SK-N-SH (cell line): ENCODE measurements at regions of chr20 and their contacts with region 1.

Region 1: DNA sequence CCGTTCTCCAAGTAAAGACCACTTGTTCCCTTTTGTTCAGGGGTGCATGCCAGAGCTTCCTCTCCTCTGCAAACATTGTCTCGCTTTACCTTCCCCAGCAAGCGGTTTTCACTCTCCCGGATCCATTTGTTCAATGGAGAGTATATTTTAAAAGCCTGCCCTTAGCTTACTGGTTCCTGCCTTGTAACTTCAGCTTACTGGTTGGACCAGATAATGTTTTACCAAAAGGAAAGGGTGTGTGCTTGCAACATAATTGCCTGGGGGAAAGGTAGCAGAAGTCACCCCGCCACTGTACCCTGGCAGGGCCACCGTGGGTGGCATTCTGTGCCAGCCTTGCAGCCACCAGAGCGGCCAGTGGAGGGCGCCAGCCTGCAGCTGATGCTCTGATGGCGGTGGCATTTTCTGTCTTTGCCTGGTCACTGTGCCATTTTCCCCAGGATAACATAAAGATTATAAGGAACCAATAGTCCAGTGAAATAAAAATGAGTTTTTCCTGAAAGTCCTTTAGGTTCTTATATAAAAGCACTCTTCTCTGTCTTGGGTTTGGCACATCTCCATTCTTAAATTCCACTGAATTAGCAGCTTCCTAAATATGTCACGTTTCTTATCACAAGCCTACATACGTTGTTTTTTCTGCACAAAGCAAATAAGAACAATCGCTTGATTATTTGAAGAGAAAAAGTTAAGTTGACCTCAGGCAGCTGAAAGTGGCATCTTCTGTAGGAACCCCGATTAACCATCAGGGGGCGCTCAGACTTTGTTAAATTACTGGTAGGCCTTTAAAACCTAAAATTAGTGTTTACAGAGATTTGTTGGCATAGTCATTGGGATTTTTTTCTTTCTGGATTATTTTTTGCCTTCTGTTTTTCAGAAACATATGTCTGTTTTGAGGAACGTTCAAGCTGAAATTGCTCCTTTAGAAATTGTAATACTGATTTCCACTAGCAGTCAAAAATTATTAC is 67.4 kb upstream of the XRN2 start:
- DNase-seq: peak; percentile 65
- H3K4me3 ChIP-seq: no peak overlapping the region; a peak in 1 of 4 replicates
- H3K27ac ChIP-seq: no peak overlapping the region
- H3K4me1 ChIP-seq: peaks cover 0 to 3% of the 10 kb centered on the region in 2 experiments; a peak in 2 of 4 replicates
- H3K27me3 ChIP-seq: no peaks in the 10 kb centered on the region
- CTCF ChIP-seq: peak; percentile 92
- EP300 ChIP-seq: no peak
- RAD21 ChIP-seq: peak; percentile 81

Region 2: GRCh38 chr20:20837574-20838021 is 398.2 kb before region 1 on chr20:
- CTCF ChIA-PET with region 1: interaction called, 27 read pairs
- POLR2A ChIA-PET with region 1: no interaction called
- DNase-seq: peak; percentile 63
- H3K4me3 ChIP-seq: peak overlapping the region in 1 of 2 experiments; percentile 47; a peak in 2 of 4 replicates
- H3K27ac ChIP-seq: no peak overlapping the region
- H3K4me1 ChIP-seq: no peaks in the 10 kb centered on the region; a peak in 1 of 4 replicates
- H3K27me3 ChIP-seq: peaks cover 36% of the 10 kb centered on the region
- CTCF ChIP-seq: peak; percentile 77
- EP300 ChIP-seq: no peak
- RAD21 ChIP-seq: peak; percentile 75

Region 3: DNA sequence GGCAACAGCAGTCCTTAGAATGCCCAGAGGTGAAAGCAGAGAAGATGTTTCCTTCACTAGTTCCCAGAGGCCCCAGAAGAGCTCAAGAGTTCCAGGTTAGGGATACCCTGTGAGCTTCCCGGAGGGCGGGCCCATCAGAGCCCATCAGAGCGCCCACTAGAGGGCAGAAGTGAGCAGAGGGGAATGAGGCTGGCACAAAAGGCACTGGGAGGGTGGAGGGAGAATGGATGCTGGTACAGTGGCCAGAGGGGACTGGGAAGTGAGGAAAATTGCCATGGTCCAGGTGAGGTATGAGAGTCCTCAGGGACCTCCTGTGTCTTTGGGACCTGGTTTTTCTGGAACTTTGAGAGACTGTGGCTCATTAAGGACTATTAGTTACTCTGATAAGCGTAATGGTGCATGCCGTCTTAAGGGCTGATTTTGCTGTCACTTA is 186.9 kb before region 1 on chr20:
- CTCF ChIA-PET with region 1: interaction called, 13 read pairs
- POLR2A ChIA-PET with region 1: no interaction called
- DNase-seq: peak; percentile 45
- H3K4me3 ChIP-seq: no peak overlapping the region; a peak in 1 of 4 replicates
- H3K27ac ChIP-seq: no peak overlapping the region
- H3K4me1 ChIP-seq: no peaks in the 10 kb centered on the region; a peak in 1 of 4 replicates
- H3K27me3 ChIP-seq: no peaks in the 10 kb centered on the region; the same call in 1 of the 2 replicates
- CTCF ChIP-seq: peak; percentile 66
- EP300 ChIP-seq: no peak
- RAD21 ChIP-seq: 0 out of 2 replicates have a peak, but pooled peaks have one; percentile 26

Region 4: DNA sequence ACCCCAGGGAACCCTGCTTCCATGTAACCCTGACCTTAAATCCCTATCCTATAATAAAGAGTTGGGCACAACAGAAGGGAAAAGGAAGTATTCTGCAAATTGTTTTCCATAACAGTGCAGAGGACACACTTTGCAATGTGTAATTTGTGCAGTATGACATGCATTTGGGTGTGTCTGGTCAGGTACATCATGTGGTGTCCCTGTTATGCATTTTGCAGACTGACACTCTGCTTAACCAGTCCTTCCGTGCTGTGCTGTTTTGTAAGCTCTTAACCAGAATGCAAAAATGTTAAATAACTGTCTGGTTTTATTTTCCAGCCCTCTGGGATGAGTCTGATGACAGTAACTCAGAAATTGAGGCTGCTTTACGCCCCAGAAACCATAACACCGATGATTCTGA is 10.4 kb after region 1 on chr20:
- CTCF ChIA-PET with region 1: interaction called, 53 read pairs
- POLR2A ChIA-PET with region 1: no interaction called
- DNase-seq: no peak
- H3K4me3 ChIP-seq: no peak overlapping the region
- H3K27ac ChIP-seq: no peak overlapping the region
- H3K4me1 ChIP-seq: no peaks in the 10 kb centered on the region
- H3K27me3 ChIP-seq: no peaks in the 10 kb centered on the region
- CTCF ChIP-seq: no peak
- EP300 ChIP-seq: no peak
- RAD21 ChIP-seq: no peak

Region 5: GRCh38 chr20:21303061-21303871 is 67.5 kb after region 1 on chr20 and contains the start of gene XRN2:
- CTCF ChIA-PET with region 1: interaction called, 11 read pairs
- POLR2A ChIA-PET with region 1: interaction called, 5 read pairs
- DNase-seq: peak; percentile 93
- H3K4me3 ChIP-seq: peak within 1 kb of the TSS; percentile 79 to 92
- H3K27ac ChIP-seq: peak within 1 kb of the TSS; percentile 94
- H3K4me1 ChIP-seq: peaks cover 0 to 2% of the 10 kb centered on the region in 2 experiments; a peak in 2 of 4 replicates
- H3K27me3 ChIP-seq: no peaks in the 10 kb centered on the region
- CTCF ChIP-seq: 0 out of 2 replicates have a peak, but pooled peaks have one; percentile 11
- EP300 ChIP-seq: no peak
- RAD21 ChIP-seq: no peak
- polyA plus RNA-seq, gene XRN2: 44.5 and 56.5 TPM in 2 replicates

Region 6: DNA sequence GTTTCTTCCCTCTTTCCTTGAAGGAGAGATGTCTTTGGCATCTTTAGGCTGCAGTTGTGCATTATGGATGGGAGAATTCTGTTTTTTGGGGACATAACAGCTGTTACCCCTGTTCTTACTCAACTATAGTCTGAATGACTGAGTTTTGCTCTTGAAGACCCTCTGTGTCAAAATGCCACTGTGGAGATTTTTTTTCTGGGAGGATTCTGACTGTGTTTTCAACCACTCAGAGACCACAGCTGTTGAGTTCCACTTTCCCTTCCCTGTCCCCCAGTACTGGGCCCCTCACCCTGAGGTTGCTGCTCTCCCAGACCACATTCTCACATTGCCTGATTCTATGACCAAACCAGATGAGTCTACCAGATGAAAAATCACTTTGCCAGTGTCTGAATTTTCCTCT is 230.0 kb after region 1 on chr20:
- CTCF ChIA-PET with region 1: interaction called, 10 read pairs
- POLR2A ChIA-PET with region 1: no interaction called
- DNase-seq: no peak
- H3K4me3 ChIP-seq: no peak overlapping the region
- H3K27ac ChIP-seq: no peak overlapping the region
- H3K4me1 ChIP-seq: no peaks in the 10 kb centered on the region
- H3K27me3 ChIP-seq: peaks cover 19% of the 10 kb centered on the region; the same call in 1 of the 2 replicates
- CTCF ChIP-seq: no peak
- EP300 ChIP-seq: no peak
- RAD21 ChIP-seq: no peak